ENCODE measurements at regions of chr4 and their contacts with region 1.

Region 1: DNA sequence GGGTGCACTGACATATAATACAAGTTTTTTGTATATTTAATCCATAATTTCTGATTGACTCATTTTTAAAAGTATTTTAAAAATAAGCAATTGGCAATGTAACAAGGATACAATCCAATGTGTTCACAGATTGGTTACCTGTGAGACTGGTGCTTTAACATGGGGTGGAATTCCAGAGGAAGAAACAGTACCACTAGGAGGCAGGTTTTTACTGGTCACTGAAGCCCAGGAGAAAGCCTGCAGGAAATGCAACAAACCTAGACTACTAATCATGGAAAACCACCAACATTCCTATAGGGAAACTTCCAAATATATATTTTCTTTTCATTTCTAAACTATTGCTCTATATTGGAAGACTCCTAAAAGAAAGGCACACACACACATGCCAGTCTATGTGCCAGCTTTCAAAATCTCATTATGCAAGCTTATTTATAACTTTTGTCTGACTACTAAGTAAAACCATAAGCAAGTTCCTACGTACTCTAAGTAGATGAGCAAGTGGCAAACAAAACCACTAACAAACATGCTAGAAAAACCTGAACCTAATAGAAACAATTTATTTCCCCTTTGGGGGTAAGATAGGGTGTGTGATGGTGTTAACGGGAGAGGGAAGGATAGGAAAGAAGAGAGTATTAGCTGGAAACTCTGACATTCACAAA is 19.2 kb downstream of the G3BP2 start:
- DNase-seq: no peak
- ATAC-seq: no peak
- H3K4me3 Mint-ChIP-seq: no peak overlapping the region
- H3K27ac Mint-ChIP-seq: peak overlapping the region; percentile 80
- H3K4me1 Mint-ChIP-seq: peaks cover 46% of the 10 kb centered on the region
- H3K27me3 Mint-ChIP-seq: no peaks in the 10 kb centered on the region

Region 2: GRCh38 chr4:75630174-75630936 is 23.6 kb before region 1 on chr4 and contains the start of gene CDKL2:
- CTCF ChIA-PET with region 1: interaction called, 3 read pairs
- POLR2A ChIA-PET with region 1: no interaction called
- intact Hi-C with region 1: loop called in 1 of 2 experiments (anchors 2 kb)
- DNase-seq: peak; percentile 94
- ATAC-seq: peak; percentile 99
- H3K4me3 Mint-ChIP-seq: peak within 1 kb of the TSS; percentile 76
- H3K27ac Mint-ChIP-seq: peak within 1 kb of the TSS; percentile 27
- H3K4me1 Mint-ChIP-seq: peaks cover 8% of the 10 kb centered on the region
- H3K27me3 Mint-ChIP-seq: no peaks in the 10 kb centered on the region
- total RNA-seq, gene CDKL2: 0.62 to 0.91 TPM

Region 3: DNA sequence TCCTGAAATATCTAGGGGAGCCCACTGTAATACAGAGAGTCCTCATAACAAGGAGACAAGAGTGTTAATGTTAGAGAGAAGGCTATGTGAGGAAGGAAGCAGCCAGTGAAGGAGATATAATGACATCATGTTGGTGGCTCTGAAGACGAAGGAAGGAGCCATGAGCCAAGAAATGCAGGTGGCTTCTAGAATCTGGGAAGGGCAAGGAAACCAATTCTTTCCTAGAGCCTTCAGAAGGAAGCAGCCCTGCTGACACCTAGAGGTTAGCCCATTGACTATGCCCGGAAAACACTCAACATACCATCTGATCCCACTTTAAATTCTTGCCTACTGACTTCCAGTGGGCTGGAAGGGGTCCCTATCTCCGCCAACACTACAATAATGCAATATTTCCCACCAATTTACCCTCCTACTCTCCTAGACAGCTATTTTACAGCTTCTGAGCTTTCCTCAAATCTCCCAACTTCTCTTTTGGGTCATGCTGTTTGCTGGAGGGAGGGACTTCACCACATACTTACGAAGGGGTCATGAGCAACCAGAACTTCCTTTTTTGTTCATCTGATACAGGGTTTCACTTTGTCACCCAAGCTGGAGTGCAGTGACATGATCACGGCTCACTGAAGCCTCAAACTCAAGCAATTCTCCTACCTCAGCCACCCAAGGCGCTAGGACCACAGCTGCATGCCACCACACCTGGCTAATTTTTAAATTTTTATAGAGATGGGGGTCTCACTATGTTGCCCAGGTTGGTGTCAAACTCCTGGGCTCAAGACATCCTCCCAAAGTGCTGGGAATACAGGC is 44.4 kb after region 1 on chr4:
- CTCF ChIA-PET with region 1: no interaction called
- POLR2A ChIA-PET with region 1: no interaction called
- intact Hi-C with region 1: loop called (anchors 1 to 2 kb)
- DNase-seq: peak; percentile 52
- ATAC-seq: peak; percentile 82
- H3K4me3 Mint-ChIP-seq: no peak overlapping the region
- H3K27ac Mint-ChIP-seq: peak overlapping the region; percentile 72
- H3K4me1 Mint-ChIP-seq: peaks cover 34% of the 10 kb centered on the region
- H3K27me3 Mint-ChIP-seq: no peaks in the 10 kb centered on the region

Region 4: GRCh38 chr4:75708218-75708691 is 54.3 kb after region 1 on chr4:
- CTCF ChIA-PET with region 1: interaction called, 3 read pairs
- POLR2A ChIA-PET with region 1: no interaction called
- intact Hi-C with region 1: loop called in 1 of 2 experiments (anchors 2 kb)
- DNase-seq: peak; percentile 58
- ATAC-seq: peak; percentile 83
- H3K4me3 Mint-ChIP-seq: no peak overlapping the region
- H3K27ac Mint-ChIP-seq: no peak overlapping the region
- H3K4me1 Mint-ChIP-seq: no peaks in the 10 kb centered on the region
- H3K27me3 Mint-ChIP-seq: no peaks in the 10 kb centered on the region